ENCODE measurements at regions of chr15 and their contacts with region 1.

Region 1: GRCh38 chr15:45022871-45023658 is at the start of gene SORD:
- DNase-seq: peak; percentile 98
- H3K4me3 Mint-ChIP-seq: peak within 1 kb of the TSS; percentile 84
- H3K27ac Mint-ChIP-seq: peak within 1 kb of the TSS; percentile 78
- H3K4me1 Mint-ChIP-seq: peaks cover 21% of the 10 kb centered on the region
- H3K27me3 Mint-ChIP-seq: peaks cover 27% of the 10 kb centered on the region
- total RNA-seq, gene SORD: 28.0 and 28.9 TPM in 2 replicates

Region 2: DNA sequence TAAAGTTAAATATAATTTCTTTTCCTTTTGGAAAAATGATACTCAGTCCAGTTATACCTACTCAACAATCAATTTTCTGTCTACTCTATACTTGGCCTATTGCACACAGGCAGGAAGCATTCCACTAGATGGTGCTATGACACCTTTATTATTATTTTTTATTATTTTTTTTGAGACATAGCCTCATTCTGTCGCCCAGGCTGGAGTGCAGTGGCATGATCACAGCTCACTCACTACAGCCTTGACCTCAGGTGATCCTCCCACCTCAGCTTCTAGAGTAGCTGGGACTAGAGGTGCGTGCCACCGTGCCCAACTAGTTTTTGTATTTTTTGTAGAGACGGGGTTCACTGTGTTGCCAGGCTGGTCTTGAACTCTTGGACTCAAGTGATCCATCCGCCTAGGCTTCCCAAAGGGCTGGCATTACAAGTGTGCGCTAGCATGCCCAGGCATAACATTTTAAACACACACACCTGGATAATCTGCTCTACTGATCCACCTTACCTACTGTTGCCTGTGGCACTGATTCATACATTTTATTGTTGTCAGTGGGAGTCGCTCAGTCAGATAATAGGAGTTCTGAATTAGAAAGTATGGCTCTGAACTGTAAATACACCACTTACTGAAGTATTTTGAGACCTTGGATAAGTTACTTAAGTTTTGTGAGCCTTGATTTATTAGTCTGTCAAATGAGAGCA is 429.9 kb before region 1 on chr15:
- intact Hi-C with region 1: loop called (anchors 10 kb)
- DNase-seq: peak; percentile 73
- H3K4me3 Mint-ChIP-seq: no peak overlapping the region
- H3K27ac Mint-ChIP-seq: peak overlapping the region; percentile 41
- H3K4me1 Mint-ChIP-seq: peaks cover 23% of the 10 kb centered on the region
- H3K27me3 Mint-ChIP-seq: no peaks in the 10 kb centered on the region

Region 3: GRCh38 chr15:44763187-44763586 is 259.9 kb before region 1 on chr15:
- intact Hi-C with region 1: no loop called
- DNase-seq: no peak
- H3K4me3 Mint-ChIP-seq: no peak overlapping the region
- H3K27ac Mint-ChIP-seq: no peak overlapping the region
- H3K4me1 Mint-ChIP-seq: no peaks in the 10 kb centered on the region
- H3K27me3 Mint-ChIP-seq: no peaks in the 10 kb centered on the region

Region 4: GRCh38 chr15:44971036-44971435 is 52.0 kb before region 1 on chr15:
- intact Hi-C with region 1: no loop called
- DNase-seq: no peak
- H3K4me3 Mint-ChIP-seq: no peak overlapping the region
- H3K27ac Mint-ChIP-seq: no peak overlapping the region
- H3K4me1 Mint-ChIP-seq: no peaks in the 10 kb centered on the region
- H3K27me3 Mint-ChIP-seq: peaks cover 13% of the 10 kb centered on the region